Common myeloid progenitor, CD34-positive (primary cell): ENCODE measurements at regions of chr2 and their contacts with region 1.

Region 1: DNA sequence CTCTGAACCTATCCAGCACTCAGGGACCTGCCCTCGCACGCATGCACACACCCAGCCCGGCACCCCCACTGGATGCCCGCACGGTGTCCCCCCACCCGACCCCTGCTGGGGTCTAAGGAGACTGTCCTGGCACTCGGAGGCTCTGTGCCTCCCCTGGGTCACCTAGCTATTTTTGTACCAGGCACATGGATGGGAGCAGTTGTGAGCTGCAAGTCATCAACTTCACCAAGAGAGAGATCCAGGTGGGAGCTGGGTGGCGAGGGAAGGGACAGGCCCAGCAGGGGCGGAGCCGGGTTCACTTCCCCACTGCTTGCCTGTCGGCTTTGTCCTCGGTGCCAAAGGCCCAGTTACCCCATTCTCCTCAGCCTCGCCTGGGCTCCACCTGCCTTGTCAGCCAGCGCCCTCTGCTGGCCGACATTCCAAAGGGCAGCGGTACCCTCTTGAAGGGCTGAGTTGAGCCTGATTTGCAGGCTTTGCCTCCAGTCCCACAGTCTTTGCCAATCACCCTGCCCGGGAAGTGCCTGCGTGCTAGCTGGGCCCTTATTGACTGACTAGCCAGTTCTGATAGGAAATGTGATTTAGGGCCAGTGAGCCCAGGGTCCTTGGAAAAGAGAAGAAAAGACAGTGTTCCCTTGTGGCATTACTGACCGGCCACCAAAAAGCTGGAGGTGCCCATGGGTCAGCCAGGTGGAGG is 5.8 kb downstream of the NT5DC4 start:
- DNase-seq: peak; percentile 92 to 96 (median 94)
- H3K4me3 ChIP-seq: no peak overlapping the region
- H3K27ac ChIP-seq: no peak overlapping the region
- H3K4me1 ChIP-seq: peaks cover 0 to 56% (median 30%) of the 10 kb centered on the region in 4 experiments
- H3K27me3 ChIP-seq: no peaks in the 10 kb centered on the region

Region 2: DNA sequence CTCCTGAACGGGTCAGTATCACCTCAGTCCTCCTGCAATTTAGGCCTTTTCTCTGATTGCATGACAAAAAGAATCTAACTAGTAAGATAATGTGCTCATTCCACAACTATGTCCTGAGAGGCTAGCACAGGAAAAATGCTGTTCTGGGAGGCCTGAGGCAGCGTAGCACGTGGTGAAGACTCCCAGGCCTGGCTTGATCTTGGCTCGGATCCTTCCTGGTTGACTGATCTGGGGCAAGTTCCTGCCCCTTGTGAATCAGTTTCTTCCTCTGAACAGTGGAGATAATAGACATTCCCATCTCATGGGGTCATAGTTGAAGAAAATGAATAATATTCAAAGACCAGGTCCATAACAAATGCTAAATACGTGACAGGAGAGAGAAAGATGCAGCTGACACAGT is 576.2 kb before region 1 on chr2:
- CTCF ChIA-PET with region 1: no interaction called
- POLR2A ChIA-PET with region 1: no interaction called
- DNase-seq: no peak
- H3K4me3 ChIP-seq: no peak overlapping the region
- H3K27ac ChIP-seq: no peak overlapping the region
- H3K4me1 ChIP-seq: peaks cover 0 to 8% (median 3%) of the 10 kb centered on the region in 4 experiments
- H3K27me3 ChIP-seq: no peaks in the 10 kb centered on the region

Region 3: DNA sequence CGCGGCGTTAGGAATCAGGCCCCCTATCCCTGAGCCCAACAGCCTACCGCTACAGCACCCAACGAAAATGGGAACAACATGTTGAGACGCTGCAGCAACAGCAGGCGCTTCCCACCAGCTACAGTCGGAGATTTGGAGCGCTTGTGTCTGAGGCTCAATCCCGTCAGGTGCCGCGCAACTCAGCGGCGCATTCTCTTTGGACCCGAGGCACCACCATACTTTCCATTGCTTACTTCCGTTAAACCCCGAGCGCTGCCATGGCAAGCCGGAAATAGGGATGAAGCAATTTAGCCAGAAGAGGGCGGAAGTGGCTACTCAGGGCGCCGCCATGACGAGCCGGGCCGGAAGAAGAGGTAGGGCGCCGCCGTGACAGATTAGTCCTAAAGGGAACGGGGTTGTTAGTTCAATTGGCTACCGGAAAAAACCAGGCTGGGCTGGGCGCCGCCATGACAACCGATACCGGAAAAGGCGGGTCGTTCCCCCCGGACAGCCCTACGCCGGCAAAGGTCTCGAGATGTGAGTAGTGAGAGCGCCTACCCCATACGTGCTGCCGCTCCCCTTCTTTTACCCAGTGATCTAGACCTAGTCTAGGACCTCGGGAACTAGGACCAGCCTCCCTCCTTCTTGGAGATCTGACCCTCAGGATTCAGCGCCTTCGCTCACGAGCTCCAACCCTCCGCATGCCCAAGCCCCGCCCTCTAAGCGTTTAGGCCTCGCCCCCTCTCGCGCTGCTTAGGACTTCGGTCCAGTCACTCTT is 142.3 kb before region 1 on chr2 and contains the start of gene CHCHD5:
- CTCF ChIA-PET with region 1: interaction called, 18 read pairs
- POLR2A ChIA-PET with region 1: no interaction called
- DNase-seq: peak; percentile 96 to 99 (median 98)
- H3K4me3 ChIP-seq: peak within 1 kb of the TSS; percentile 32 to 92 (median 84)
- H3K27ac ChIP-seq: peak within 1 kb of the TSS; percentile 71 to 87
- H3K4me1 ChIP-seq: peaks cover 6 to 32% (median 23%) of the 10 kb centered on the region in 4 experiments
- H3K27me3 ChIP-seq: no peaks in the 10 kb centered on the region

Region 4: GRCh38 chr2:112626604-112627059 is 100.0 kb before region 1 on chr2:
- CTCF ChIA-PET with region 1: interaction called, 275 read pairs
- POLR2A ChIA-PET with region 1: interaction called, 3 read pairs
- DNase-seq: peak; percentile 88 to 97 (median 96)
- H3K4me3 ChIP-seq: peak overlapping the region in 3 of 7 experiments; percentile 25 to 51 (median 37)
- H3K27ac ChIP-seq: peak overlapping the region; percentile 11 to 43
- H3K4me1 ChIP-seq: peaks cover 13 to 76% (median 71%) of the 10 kb centered on the region in 4 experiments
- H3K27me3 ChIP-seq: no peaks in the 10 kb centered on the region

Region 5: DNA sequence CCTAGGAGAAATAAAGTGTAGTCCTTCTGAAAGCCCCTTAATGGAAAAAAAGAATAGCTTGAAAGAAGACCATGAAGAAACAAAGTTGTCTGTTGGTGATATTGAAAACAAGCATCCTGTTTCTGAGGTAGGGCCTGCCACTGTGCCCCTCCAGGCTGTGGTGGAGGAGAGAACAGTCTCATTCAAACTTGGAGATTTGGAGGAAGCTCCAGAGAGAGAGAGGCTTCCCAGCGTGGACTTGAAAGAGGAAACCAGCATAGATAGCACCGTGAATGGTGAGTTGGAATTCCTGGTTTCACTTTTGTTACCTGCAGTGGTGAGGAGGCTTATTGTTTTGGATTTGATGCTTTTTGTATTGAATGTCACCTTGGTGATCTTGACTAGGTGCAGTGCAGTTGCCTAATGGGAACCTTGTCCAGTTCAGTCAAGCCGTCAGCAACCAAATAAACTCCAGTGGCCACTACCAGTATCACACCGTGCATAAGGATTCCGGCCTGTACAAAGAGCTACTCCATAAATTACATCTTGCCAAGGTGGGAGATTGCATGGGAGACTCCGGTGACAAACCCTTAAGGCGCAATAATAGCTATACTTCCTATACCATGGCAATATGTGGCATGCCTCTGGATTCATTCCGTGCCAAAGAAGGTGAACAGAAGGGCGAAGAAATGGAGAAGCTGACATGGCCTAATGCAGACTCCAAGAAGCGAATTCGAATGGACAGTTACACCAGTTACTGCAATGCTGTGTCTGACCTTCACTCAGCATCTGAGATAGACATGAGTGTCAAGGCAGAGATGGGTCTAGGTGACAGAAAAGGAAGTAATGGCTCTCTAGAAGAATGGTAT is 67.6 kb before region 1 on chr2:
- CTCF ChIA-PET with region 1: interaction called, 37 read pairs
- POLR2A ChIA-PET with region 1: no interaction called
- DNase-seq: peak in 1 of 3 donors; percentile 13
- H3K4me3 ChIP-seq: no peak overlapping the region
- H3K27ac ChIP-seq: peak overlapping the region in 1 of 2 experiments; percentile 30
- H3K4me1 ChIP-seq: peaks cover 0 to 19% (median 15%) of the 10 kb centered on the region in 4 experiments
- H3K27me3 ChIP-seq: no peaks in the 10 kb centered on the region

Region 6: GRCh38 chr2:112674229-112674628 is 52.4 kb before region 1 on chr2:
- CTCF ChIA-PET with region 1: interaction called, 23 read pairs
- POLR2A ChIA-PET with region 1: no interaction called
- DNase-seq: peak; percentile 86 to 93 (median 91)
- H3K4me3 ChIP-seq: peak overlapping the region in 6 of 7 experiments; percentile 20 to 65 (median 28)
- H3K27ac ChIP-seq: no peak overlapping the region
- H3K4me1 ChIP-seq: peaks cover 0 to 32% (median 18%) of the 10 kb centered on the region in 4 experiments
- H3K27me3 ChIP-seq: no peaks in the 10 kb centered on the region

Region 7: GRCh38 chr2:112706170-112706664 is 20.4 kb before region 1 on chr2:
- CTCF ChIA-PET with region 1: interaction called, 174 read pairs
- POLR2A ChIA-PET with region 1: interaction called, 11 read pairs
- DNase-seq: peak; percentile 97 to 99 (median 99)
- H3K4me3 ChIP-seq: peak overlapping the region in 3 of 7 experiments; percentile 26 to 50 (median 30)
- H3K27ac ChIP-seq: peak overlapping the region in 1 of 2 experiments; percentile 49
- H3K4me1 ChIP-seq: peaks cover 28 to 89% (median 70%) of the 10 kb centered on the region in 4 experiments
- H3K27me3 ChIP-seq: no peaks in the 10 kb centered on the region

Region 8: GRCh38 chr2:112737542-112738232 is 11.0 kb after region 1 on chr2:
- CTCF ChIA-PET with region 1: interaction called, 57 read pairs
- POLR2A ChIA-PET with region 1: no interaction called
- DNase-seq: no peak
- H3K4me3 ChIP-seq: no peak overlapping the region
- H3K27ac ChIP-seq: no peak overlapping the region
- H3K4me1 ChIP-seq: peaks cover 0 to 4% (median 0%) of the 10 kb centered on the region in 4 experiments
- H3K27me3 ChIP-seq: no peaks in the 10 kb centered on the region

Region 9: GRCh38 chr2:113181258-113182051 is 454.8 kb after region 1 on chr2:
- CTCF ChIA-PET with region 1: no interaction called
- POLR2A ChIA-PET with region 1: no interaction called
- DNase-seq: peak in 2 of 3 donors; percentile 71 to 82
- H3K4me3 ChIP-seq: peak overlapping the region in 3 of 7 experiments; percentile 9 to 34 (median 15)
- H3K27ac ChIP-seq: no peak overlapping the region
- H3K4me1 ChIP-seq: peaks cover 3 to 44% (median 37%) of the 10 kb centered on the region in 4 experiments
- H3K27me3 ChIP-seq: no peaks in the 10 kb centered on the region